Activated CD8-positive, alpha-beta T cell treated with anti-CD3 and anti-CD28 coated beads, Interleukin-2, amount 10 ng/mL, durations not matched to agents 7 days and 5 days (primary cell): ENCODE measurements at regions of chr12 and their contacts with region 1.

Region 1: DNA sequence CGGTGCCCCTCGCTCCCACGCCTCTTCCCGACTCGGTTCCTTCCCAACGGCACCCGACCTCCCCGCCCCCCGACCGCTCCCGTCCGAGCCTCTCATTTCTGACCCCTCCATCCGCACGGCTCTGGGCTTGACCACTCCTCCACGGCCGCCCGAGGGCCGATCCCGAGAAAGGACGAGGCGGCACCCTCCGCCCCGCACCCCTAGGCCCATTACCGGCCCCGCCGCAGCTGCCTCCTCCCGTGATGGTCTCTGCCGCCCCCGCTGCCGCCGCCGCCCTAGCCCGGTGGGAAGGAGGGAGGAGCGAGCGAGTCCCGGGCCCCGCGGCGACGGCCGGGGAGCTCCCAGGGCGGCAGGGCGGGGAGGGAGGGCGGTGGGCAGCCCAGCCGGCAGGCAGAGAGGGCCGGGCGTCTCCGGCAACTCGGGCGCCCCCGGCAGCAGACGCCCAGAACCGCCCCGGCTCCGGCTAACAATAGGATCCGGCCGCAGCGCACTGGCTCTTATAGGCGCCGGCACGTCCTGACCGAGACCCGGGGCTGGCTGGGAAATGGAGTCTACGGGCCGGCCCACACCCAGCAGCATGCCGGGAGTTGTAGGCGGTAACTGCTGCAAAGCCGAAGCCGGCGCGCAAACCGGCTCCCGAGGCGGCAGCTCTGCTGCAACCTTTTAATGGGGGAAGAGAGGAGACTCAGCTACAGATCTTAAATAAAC is at the start of gene CSRNP2:
- DNase-seq: peak; percentile 97
- ATAC-seq: peak; percentile 99
- H3K4me3 Mint-ChIP-seq: peak within 1 kb of the TSS; percentile 92
- H3K27ac Mint-ChIP-seq: peak within 1 kb of the TSS; percentile 82
- H3K4me1 Mint-ChIP-seq: peaks cover 25% of the 10 kb centered on the region
- H3K27me3 Mint-ChIP-seq: no peaks in the 10 kb centered on the region
- total RNA-seq, gene CSRNP2: 13.4 to 13.7 TPM

Region 2: DNA sequence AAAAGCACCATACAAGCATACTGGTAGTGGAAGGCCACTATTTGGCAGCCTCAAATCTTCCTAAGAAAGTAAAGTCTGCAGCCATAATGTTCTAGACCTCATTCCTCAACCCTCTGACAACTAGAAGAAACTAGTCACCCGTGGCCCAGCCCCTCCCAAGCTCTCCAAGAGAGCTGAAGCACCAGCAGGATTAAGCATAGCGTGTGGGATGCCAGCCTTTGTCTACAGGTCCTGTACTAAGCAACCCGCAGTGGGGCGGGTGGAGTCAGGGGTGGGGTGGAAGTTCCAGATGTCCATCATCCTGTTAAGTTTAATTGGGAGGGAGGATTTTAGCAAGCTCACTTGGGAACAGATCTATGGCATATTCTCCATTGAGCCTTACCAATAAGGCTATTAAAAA is 71.3 kb before region 1 on chr12:
- CTCF ChIA-PET with region 1: no interaction called
- POLR2A ChIA-PET with region 1: no interaction called
- DNase-seq: no peak
- ATAC-seq: no peak
- H3K4me3 Mint-ChIP-seq: no peak overlapping the region
- H3K27ac Mint-ChIP-seq: no peak overlapping the region
- H3K4me1 Mint-ChIP-seq: peaks cover 19% of the 10 kb centered on the region
- H3K27me3 Mint-ChIP-seq: no peaks in the 10 kb centered on the region

Region 3: GRCh38 chr12:51047655-51048540 is 35.4 kb before region 1 on chr12 and contains the start of gene LETMD1:
- CTCF ChIA-PET with region 1: interaction called, 5 read pairs
- POLR2A ChIA-PET with region 1: interaction called, 15 read pairs
- DNase-seq: peak; percentile 96
- ATAC-seq: peak; percentile 99
- H3K4me3 Mint-ChIP-seq: peak within 1 kb of the TSS; percentile 88
- H3K27ac Mint-ChIP-seq: peak within 1 kb of the TSS; percentile 87
- H3K4me1 Mint-ChIP-seq: peaks cover 31% of the 10 kb centered on the region
- H3K27me3 Mint-ChIP-seq: no peaks in the 10 kb centered on the region
- total RNA-seq, gene LETMD1: 60.1 to 69.7 TPM